ENCODE measurements at regions of chr11 and their contacts with region 1.

Region 1: GRCh38 chr11:122754553-122755322 is 83.6 kb upstream of the CRTAM start:
- DNase-seq: peak; percentile 59
- H3K4me3 ChIP-seq: no peak overlapping the region
- H3K27ac ChIP-seq: no peak overlapping the region
- H3K4me1 ChIP-seq: peaks cover 49% of the 10 kb centered on the region
- H3K27me3 ChIP-seq: no peaks in the 10 kb centered on the region
- CTCF ChIP-seq: peak; percentile 73

Region 2: GRCh38 chr11:122523846-122524805 is 230.6 kb before region 1 on chr11:
- CTCF ChIA-PET with region 1: no interaction called
- POLR2A ChIA-PET with region 1: no interaction called
- intact Hi-C with region 1: no loop called
- DNase-seq: peak; percentile 97
- H3K4me3 ChIP-seq: peak overlapping the region; percentile 10
- H3K27ac ChIP-seq: peak overlapping the region; percentile 77
- H3K4me1 ChIP-seq: peaks cover 43% of the 10 kb centered on the region
- H3K27me3 ChIP-seq: no peaks in the 10 kb centered on the region
- CTCF ChIP-seq: no peak

Region 3: GRCh38 chr11:122628810-122629555 is 125.8 kb before region 1 on chr11:
- CTCF ChIA-PET with region 1: interaction called, 14 read pairs
- POLR2A ChIA-PET with region 1: no interaction called
- intact Hi-C with region 1: no loop called
- DNase-seq: peak; percentile 89
- H3K4me3 ChIP-seq: no peak overlapping the region
- H3K27ac ChIP-seq: no peak overlapping the region
- H3K4me1 ChIP-seq: no peaks in the 10 kb centered on the region
- H3K27me3 ChIP-seq: no peaks in the 10 kb centered on the region
- CTCF ChIP-seq: peak; percentile 93

Region 4: DNA sequence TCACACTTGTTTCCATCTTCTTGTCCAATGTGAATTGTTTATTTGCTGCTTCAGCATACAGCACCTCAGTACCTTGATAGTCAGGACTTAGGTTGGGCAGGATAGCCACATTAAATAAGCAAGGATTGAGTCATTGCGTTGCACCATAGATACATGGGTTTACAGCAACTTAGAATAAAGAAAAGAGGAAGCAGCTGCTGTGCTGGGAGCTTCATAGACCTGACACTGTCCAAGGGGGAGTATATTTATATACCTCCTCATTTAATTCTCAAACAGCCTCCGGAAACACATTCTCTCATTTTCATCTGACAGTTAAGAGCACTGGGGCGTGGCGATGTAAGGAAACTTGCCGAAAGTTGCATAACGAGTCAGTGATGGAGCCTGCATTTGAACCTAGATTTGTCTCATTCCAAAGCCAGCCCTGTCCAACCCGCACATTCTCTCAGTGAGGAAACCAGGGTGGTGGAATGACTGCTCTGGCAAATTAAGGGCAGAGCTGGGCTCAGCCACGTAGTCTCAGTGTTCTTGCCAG is 57.0 kb before region 1 on chr11:
- CTCF ChIA-PET with region 1: interaction called, 15 read pairs
- POLR2A ChIA-PET with region 1: no interaction called
- intact Hi-C with region 1: no loop called
- DNase-seq: peak; percentile 92
- H3K4me3 ChIP-seq: no peak overlapping the region
- H3K27ac ChIP-seq: no peak overlapping the region
- H3K4me1 ChIP-seq: peaks cover 29% of the 10 kb centered on the region
- H3K27me3 ChIP-seq: no peaks in the 10 kb centered on the region
- CTCF ChIP-seq: no peak

Region 5: DNA sequence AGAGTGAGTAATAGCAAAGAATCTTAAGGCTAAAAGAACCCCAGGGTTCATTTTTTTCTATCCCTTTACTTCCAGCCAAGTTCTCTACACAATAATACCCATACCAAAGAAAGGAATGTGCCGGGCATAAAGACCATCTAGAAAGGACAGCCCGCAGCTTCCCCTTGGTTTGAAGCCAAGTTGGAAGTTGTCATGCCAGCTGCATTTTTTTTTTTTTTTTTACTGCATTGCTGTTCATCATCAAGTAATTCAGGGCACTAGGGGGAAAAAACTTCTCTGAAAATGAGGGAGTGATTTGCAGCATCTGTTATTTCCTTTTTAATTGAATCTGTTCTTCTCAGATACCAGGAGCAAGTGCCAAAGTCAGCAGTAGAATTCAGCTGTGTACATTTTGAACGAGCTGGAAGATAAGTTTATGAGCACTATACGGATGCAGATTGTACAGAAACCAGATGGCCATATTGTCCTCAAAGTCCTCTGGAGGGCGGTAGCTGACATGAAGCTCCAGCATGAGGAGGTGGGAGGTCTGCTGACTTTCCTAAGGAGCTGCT is 42.8 kb before region 1 on chr11:
- CTCF ChIA-PET with region 1: interaction called, 12 read pairs
- POLR2A ChIA-PET with region 1: no interaction called
- intact Hi-C with region 1: no loop called
- DNase-seq: peak; percentile 88
- H3K4me3 ChIP-seq: no peak overlapping the region
- H3K27ac ChIP-seq: peak overlapping the region; percentile 43
- H3K4me1 ChIP-seq: peaks cover 36% of the 10 kb centered on the region
- H3K27me3 ChIP-seq: no peaks in the 10 kb centered on the region
- CTCF ChIP-seq: peak; percentile 67